Uterus (tissue), 4 donors: ENCODE measurements at regions of chrX and their contacts with region 1.

Region 1: GRCh38 chrX:32788936-32789335 is 422.4 kb downstream of the DMD start:
- DNase-seq: no peak
- H3K4me3 ChIP-seq: no peak overlapping the region
- H3K27ac ChIP-seq: no peak overlapping the region
- H3K4me1 ChIP-seq: no peaks in the 10 kb centered on the region
- H3K27me3 ChIP-seq: no peaks in the 10 kb centered on the region
- CTCF ChIP-seq: no peak
- POLR2A ChIP-seq: no peak

Region 2: DNA sequence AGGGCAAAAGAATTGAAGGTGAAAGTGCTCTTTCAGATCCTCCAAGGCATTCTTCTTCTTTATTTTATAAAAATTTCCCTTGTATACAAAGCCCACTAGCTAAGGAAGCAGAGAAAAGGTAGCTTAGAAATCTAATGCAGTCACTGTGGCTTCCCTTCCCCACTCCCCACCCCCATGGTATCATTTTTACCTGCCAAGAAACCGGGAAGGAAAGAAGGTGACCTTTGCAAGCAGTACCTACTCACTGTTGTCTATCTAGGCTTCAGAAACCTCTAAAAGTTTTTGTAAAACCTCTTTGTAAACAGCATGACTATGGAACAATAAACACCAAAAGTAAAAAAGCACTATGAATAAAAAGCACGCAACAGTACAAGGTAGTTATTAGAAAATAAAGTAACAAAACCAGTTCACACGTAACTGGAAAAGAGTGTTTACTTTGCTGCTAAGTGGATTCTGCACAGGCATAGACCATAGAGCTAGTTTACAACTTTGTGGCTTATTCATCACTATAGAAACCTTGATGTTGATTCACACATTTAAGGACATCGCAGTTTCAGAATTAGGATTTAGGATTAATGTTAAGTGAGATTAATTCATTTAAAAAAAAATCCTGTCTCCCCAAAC is 1607.4 kb before region 1 on chrX:
- intact Hi-C with region 1: loop called (anchors 10 kb)
- DNase-seq: no peak
- H3K4me3 ChIP-seq: no peak overlapping the region
- H3K27ac ChIP-seq: no peak overlapping the region
- H3K4me1 ChIP-seq: no peaks in the 10 kb centered on the region
- H3K27me3 ChIP-seq: no peaks in the 10 kb centered on the region
- CTCF ChIP-seq: no peak
- POLR2A ChIP-seq: no peak

Region 3: GRCh38 chrX:33045882-33046281 is 256.9 kb after region 1 on chrX:
- intact Hi-C with region 1: no loop called
- DNase-seq: no peak
- H3K4me3 ChIP-seq: no peak overlapping the region
- H3K27ac ChIP-seq: no peak overlapping the region
- H3K4me1 ChIP-seq: no peaks in the 10 kb centered on the region
- H3K27me3 ChIP-seq: no peaks in the 10 kb centered on the region
- CTCF ChIP-seq: no peak
- POLR2A ChIP-seq: no peak